Naive thymus-derived CD4-positive, alpha-beta T cell (primary cell): ENCODE measurements at regions of chr1 and their contacts with region 1.

Region 1: GRCh38 chr1:111769517-111770146 is 13.9 kb downstream of the DDX20 start:
- DNase-seq: peak in 7 of 9 donors; percentile 26 to 68 (median 55)
- ATAC-seq: peak; percentile 82
- H3K4me3 ChIP-seq: no peak overlapping the region
- H3K4me3 Mint-ChIP-seq: no peak overlapping the region
- H3K27ac ChIP-seq: no peak overlapping the region
- H3K27ac Mint-ChIP-seq: peak overlapping the region in 4 of 9 donors; percentile 5 to 56 (median 40)
- H3K4me1 ChIP-seq: no peaks in the 10 kb centered on the region
- H3K4me1 Mint-ChIP-seq: peaks cover 0 to 10% (median 5%) of the 10 kb centered on the region in 7 donors
- H3K27me3 ChIP-seq: no peaks in the 10 kb centered on the region
- H3K27me3 Mint-ChIP-seq: no peaks in the 10 kb centered on the region

Region 2: DNA sequence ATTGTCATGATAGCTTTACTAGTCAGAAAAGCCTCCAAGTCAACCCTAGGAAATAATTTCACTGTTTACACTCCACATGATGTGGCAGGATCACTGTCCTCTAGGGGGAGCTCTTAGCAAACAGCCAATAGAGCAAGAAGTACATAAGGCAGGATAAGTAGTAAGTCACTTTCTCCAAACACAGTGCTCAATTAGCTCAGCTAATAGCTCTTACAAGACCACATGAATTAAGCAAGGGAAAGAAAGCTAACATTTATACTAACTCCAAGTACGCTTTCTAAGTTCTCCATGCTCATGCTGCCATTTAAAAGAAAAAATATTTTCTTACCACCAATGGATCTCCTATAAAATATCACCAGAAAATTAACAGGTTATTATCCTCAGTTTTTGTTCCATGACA is 739.0 kb before region 1 on chr1:
- CTCF ChIA-PET with region 1: interaction called, 9 read pairs
- POLR2A ChIA-PET with region 1: no interaction called
- intact Hi-C with region 1: loop called (anchors 1 to 5 kb)
- DNase-seq: peak in 8 of 9 donors; percentile 20 to 69 (median 56)
- ATAC-seq: peak; percentile 66
- H3K4me3 ChIP-seq: no peak overlapping the region
- H3K4me3 Mint-ChIP-seq: no peak overlapping the region
- H3K27ac ChIP-seq: no peak overlapping the region
- H3K27ac Mint-ChIP-seq: peak overlapping the region in 2 of 9 donors; percentile 3 to 22
- H3K4me1 ChIP-seq: no peaks in the 10 kb centered on the region
- H3K4me1 Mint-ChIP-seq: peaks cover 0 to 5% (median 0%) of the 10 kb centered on the region in 7 donors
- H3K27me3 ChIP-seq: no peaks in the 10 kb centered on the region
- H3K27me3 Mint-ChIP-seq: peaks cover 0 to 28% (median 13%) of the 10 kb centered on the region in 5 donors

Region 3: DNA sequence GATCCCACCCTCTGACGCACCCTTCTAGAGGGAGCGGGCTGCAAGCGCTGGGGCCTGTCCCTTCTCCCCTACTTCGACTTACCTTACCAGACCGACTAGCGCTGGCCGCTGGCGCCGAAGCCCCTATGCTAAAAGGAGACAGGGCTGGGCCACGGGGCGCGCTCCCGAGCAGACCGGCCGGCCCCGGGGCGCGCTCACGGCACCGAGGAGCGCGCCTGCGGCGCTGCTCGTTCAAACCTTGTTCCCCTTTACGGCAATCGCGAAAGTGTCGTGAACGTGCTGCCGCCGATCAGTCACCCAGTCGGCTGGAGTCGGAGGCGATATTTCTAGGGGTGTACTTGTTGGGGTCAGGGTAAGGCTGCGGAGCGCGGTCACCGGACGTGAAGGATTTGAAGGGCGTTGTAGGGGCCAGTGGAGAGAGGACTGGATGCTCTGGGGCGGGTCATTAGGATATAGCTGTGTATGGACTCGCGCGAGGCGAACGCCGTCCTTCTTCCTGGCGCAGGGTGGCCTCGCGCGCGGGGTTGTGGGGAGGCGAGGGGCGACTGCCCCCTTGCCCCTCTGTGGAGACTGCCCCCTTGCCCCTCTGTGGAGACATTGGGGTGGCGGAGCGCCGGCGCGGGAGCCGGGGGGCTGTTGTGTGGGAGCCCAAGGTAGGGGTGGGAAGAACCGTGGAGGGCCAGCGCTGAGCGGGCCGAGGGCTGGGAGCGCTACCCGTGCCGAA is 629.5 kb before region 1 on chr1 and contains the starts of genes CEPT1 and DRAM2:
- CTCF ChIA-PET with region 1: no interaction called
- POLR2A ChIA-PET with region 1: no interaction called
- intact Hi-C with region 1: loop called in 1 of 2 experiments (anchors 5 kb)
- DNase-seq: peak; percentile 77 to 93 (median 89)
- ATAC-seq: peak; percentile 95
- H3K4me3 ChIP-seq: peak within 1 kb of the TSS; percentile 91
- H3K4me3 Mint-ChIP-seq: peak within 1 kb of the TSS; percentile 87 to 100 (median 98)
- H3K27ac ChIP-seq: peak within 1 kb of the TSS; percentile 93
- H3K27ac Mint-ChIP-seq: peak within 1 kb of the TSS; percentile 91 to 100 (median 97)
- H3K4me1 ChIP-seq: peaks cover 18 to 22% of the 10 kb centered on the region in 2 donors
- H3K4me1 Mint-ChIP-seq: peaks cover 40 to 75% (median 57%) of the 10 kb centered on the region in 7 donors
- H3K27me3 ChIP-seq: no peaks in the 10 kb centered on the region
- H3K27me3 Mint-ChIP-seq: no peaks in the 10 kb centered on the region
- total RNA-seq, gene CEPT1: 39.1 to 57.5 (median 40.2) TPM
- total RNA-seq, gene DRAM2: 26.9 to 51.6 (median 43.5) TPM

Region 4: DNA sequence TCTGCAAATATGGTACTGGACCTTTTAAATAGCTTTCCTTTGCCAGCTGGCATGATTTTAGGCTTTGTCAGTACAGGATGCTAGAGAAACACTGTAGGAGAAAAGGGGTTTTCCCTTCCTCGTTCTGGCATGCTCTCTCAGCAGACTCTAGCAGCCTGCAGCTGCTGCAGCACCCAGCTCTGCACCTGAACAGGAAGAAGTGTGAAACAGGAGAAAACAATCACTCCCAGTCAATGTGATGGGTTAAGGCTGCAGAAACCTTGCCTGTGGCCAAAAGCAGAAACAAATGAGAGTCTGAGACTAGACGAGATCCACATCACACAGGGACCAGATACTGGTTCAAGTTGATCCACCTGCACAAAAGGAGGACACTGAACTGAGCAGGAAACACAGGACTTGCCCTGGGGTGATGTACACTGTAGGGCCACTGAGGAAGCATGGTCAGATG is 363.3 kb before region 1 on chr1:
- CTCF ChIA-PET with region 1: interaction called, 3 read pairs
- POLR2A ChIA-PET with region 1: no interaction called
- intact Hi-C with region 1: loop called in 1 of 2 experiments (anchors 5 kb)
- DNase-seq: peak in 8 of 9 donors; percentile 33 to 74 (median 64)
- ATAC-seq: peak; percentile 99
- H3K4me3 ChIP-seq: no peak overlapping the region
- H3K4me3 Mint-ChIP-seq: peak overlapping the region; percentile 29 to 81 (median 61)
- H3K27ac ChIP-seq: peak overlapping the region; percentile 54
- H3K27ac Mint-ChIP-seq: peak overlapping the region in 8 of 9 donors; percentile 67 to 90 (median 78)
- H3K4me1 ChIP-seq: peaks cover 12 to 24% of the 10 kb centered on the region in 2 donors
- H3K4me1 Mint-ChIP-seq: peaks cover 14 to 38% (median 31%) of the 10 kb centered on the region in 7 donors
- H3K27me3 ChIP-seq: no peaks in the 10 kb centered on the region
- H3K27me3 Mint-ChIP-seq: peaks cover 0 to 26% (median 0%) of the 10 kb centered on the region in 5 donors

Region 5: GRCh38 chr1:111441573-111442192 is 327.9 kb before region 1 on chr1:
- CTCF ChIA-PET with region 1: interaction called, 3 read pairs
- POLR2A ChIA-PET with region 1: no interaction called
- intact Hi-C with region 1: loop called in 1 of 2 experiments (anchors 1 kb)
- DNase-seq: peak; percentile 44 to 75 (median 67)
- ATAC-seq: peak; percentile 95
- H3K4me3 ChIP-seq: no peak overlapping the region
- H3K4me3 Mint-ChIP-seq: no peak overlapping the region
- H3K27ac ChIP-seq: peak overlapping the region; percentile 47
- H3K27ac Mint-ChIP-seq: peak overlapping the region in 8 of 9 donors; percentile 49 to 90 (median 84)
- H3K4me1 ChIP-seq: peaks cover 4 to 7% of the 10 kb centered on the region in 2 donors
- H3K4me1 Mint-ChIP-seq: peaks cover 8 to 49% (median 34%) of the 10 kb centered on the region in 7 donors
- H3K27me3 ChIP-seq: no peaks in the 10 kb centered on the region
- H3K27me3 Mint-ChIP-seq: no peaks in the 10 kb centered on the region

Region 6: GRCh38 chr1:111481387-111482221 is 288.0 kb before region 1 on chr1:
- CTCF ChIA-PET with region 1: interaction called, 42 read pairs
- POLR2A ChIA-PET with region 1: no interaction called
- intact Hi-C with region 1: loop called (anchors 1 kb)
- DNase-seq: peak; percentile 23 to 65 (median 54)
- ATAC-seq: peak; percentile 80
- H3K4me3 ChIP-seq: no peak overlapping the region
- H3K4me3 Mint-ChIP-seq: peak overlapping the region in 1 of 10 donors; percentile 20
- H3K27ac ChIP-seq: no peak overlapping the region
- H3K27ac Mint-ChIP-seq: peak overlapping the region in 4 of 9 donors; percentile 22 to 86 (median 56)
- H3K4me1 ChIP-seq: peaks cover 22 to 25% of the 10 kb centered on the region in 2 donors
- H3K4me1 Mint-ChIP-seq: peaks cover 32 to 68% (median 53%) of the 10 kb centered on the region in 7 donors
- H3K27me3 ChIP-seq: no peaks in the 10 kb centered on the region
- H3K27me3 Mint-ChIP-seq: peaks cover 0 to 25% (median 0%) of the 10 kb centered on the region in 5 donors

Region 7: DNA sequence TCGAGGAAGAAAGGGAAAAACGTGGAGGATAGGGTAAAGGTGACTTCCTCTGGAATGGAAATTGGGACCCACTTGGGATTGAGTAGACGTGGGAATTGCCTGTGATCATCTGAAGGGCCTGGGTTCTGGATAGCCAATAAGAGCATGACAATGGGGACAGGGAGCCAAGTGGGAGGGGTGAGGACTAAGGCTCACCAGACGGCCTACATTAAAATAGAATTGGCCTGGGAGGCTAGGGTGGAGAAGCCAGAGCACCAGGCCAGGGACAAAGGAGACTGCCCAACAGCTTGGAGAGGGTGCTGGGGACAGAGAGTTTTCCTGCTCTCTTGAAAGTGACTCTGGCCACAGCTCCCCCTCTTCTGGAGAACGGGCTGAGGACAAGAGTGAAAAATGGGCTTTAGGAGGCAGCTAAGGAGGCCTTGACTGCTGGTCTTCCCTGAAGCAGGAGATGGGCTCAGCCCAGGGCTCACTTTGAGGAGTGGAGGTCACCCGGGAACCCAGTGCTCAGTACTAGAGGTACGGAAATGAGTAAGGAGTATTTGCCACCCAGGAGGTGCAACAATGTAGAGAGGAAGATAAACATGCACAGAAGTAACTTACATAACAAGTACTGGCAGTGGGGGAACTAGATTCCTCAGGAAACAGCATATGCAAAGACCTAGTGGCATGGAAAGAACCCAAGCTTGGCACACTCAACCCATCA is 49.2 kb before region 1 on chr1:
- CTCF ChIA-PET with region 1: interaction called, 83 read pairs
- POLR2A ChIA-PET with region 1: interaction called, 5 read pairs
- intact Hi-C with region 1: loop called (anchors 1 kb)
- DNase-seq: no peak
- ATAC-seq: no peak
- H3K4me3 ChIP-seq: no peak overlapping the region
- H3K4me3 Mint-ChIP-seq: no peak overlapping the region
- H3K27ac ChIP-seq: no peak overlapping the region
- H3K27ac Mint-ChIP-seq: peak overlapping the region in 7 of 9 donors; percentile 31 to 80 (median 52)
- H3K4me1 ChIP-seq: peaks cover 0 to 8% of the 10 kb centered on the region in 2 donors
- H3K4me1 Mint-ChIP-seq: peaks cover 9 to 31% (median 19%) of the 10 kb centered on the region in 7 donors
- H3K27me3 ChIP-seq: no peaks in the 10 kb centered on the region
- H3K27me3 Mint-ChIP-seq: no peaks in the 10 kb centered on the region